ENCODE measurements at regions of chr16 and their contacts with region 1.

Region 1: GRCh38 chr16:74813109-74813641 is 38.6 kb upstream of the FA2H start:
- DNase-seq: peak; percentile 94 to 97
- H3K4me3 ChIP-seq: no peak overlapping the region
- H3K4me3 Mint-ChIP-seq: peak overlapping the region; percentile 12
- H3K27ac Mint-ChIP-seq: no peak overlapping the region
- H3K4me1 ChIP-seq: peaks cover 51% of the 10 kb centered on the region
- H3K4me1 Mint-ChIP-seq: peaks cover 34% of the 10 kb centered on the region
- H3K27me3 ChIP-seq: no peaks in the 10 kb centered on the region
- H3K27me3 Mint-ChIP-seq: no peaks in the 10 kb centered on the region
- CTCF ChIP-seq: peak; percentile 99

Region 2: GRCh38 chr16:74709441-74709877 is 103.7 kb before region 1 on chr16:
- CTCF ChIA-PET with region 1: interaction called, 5 read pairs
- POLR2A ChIA-PET with region 1: no interaction called
- intact Hi-C with region 1: loop called (anchors 1 kb)
- DNase-seq: peak; percentile 83 to 92
- H3K4me3 ChIP-seq: no peak overlapping the region
- H3K4me3 Mint-ChIP-seq: no peak overlapping the region
- H3K27ac Mint-ChIP-seq: no peak overlapping the region
- H3K4me1 ChIP-seq: no peaks in the 10 kb centered on the region
- H3K4me1 Mint-ChIP-seq: peaks cover 6% of the 10 kb centered on the region
- H3K27me3 ChIP-seq: no peaks in the 10 kb centered on the region
- H3K27me3 Mint-ChIP-seq: peaks cover 2% of the 10 kb centered on the region
- CTCF ChIP-seq: peak; percentile 95 to 99

Region 3: DNA sequence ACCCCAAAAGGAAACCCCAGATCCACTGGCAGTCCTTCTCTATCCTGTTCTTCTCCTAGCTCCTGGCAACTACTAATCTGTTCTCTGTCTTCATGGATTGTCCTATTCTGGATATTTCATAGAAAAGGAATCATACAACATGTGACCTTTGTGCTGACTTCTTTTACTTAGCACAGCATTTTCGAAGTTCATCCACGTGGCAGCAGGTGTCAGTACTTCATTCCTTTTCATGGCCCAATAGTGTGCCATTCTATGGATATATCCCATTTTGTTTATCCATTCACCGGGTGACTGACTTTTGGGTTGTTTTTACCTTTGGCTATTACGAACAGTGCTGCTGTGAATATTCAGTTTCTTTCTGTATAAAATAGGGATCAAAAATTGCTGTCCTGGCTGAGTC is 28.1 kb before region 1 on chr16:
- CTCF ChIA-PET with region 1: interaction called, 6 read pairs
- POLR2A ChIA-PET with region 1: no interaction called
- intact Hi-C with region 1: loop called (anchors 1 kb)
- DNase-seq: peak in 1 of 2 experiments; percentile 22
- H3K4me3 ChIP-seq: no peak overlapping the region
- H3K4me3 Mint-ChIP-seq: no peak overlapping the region
- H3K27ac Mint-ChIP-seq: no peak overlapping the region
- H3K4me1 ChIP-seq: no peaks in the 10 kb centered on the region
- H3K4me1 Mint-ChIP-seq: no peaks in the 10 kb centered on the region
- H3K27me3 ChIP-seq: no peaks in the 10 kb centered on the region
- H3K27me3 Mint-ChIP-seq: no peaks in the 10 kb centered on the region
- CTCF ChIP-seq: peak in 1 of 2 experiments; percentile 23